ENCODE measurements at regions of chr1 and their contacts with region 1.

Region 1: DNA sequence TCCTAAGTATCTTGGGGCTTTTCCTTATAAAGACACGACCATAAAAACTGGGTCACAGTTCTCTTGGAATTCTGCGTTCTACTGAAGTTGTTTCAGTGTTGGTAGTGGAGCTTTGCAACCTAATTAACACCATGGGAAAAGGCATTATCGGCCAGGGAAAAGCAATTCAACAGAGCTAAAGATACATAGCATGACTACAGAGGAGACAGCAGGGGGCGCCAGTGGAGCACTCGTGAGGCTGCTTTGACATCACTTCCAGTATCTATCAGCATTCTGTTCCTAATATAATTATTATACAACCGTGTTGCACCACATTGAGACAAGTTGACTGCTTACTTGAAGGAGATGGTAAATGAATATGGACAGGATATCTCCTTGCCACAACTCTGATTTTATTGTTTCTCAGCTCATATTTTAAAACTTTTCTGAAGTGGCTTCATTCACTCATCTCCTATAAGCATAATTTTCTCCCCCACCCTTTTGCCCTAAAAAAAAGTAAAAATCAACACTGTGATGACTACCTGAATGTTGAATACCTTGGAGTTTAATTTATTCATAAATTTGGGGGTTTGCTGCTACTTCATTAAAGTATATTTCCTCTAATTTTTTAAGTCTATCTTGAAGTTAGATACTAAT is 39.4 kb downstream of the ZP4 start:
- DNase-seq: peak; percentile 87
- H3K4me3 Mint-ChIP-seq: no peak overlapping the region
- H3K27ac Mint-ChIP-seq: no peak overlapping the region
- H3K4me1 Mint-ChIP-seq: no peaks in the 10 kb centered on the region
- H3K27me3 Mint-ChIP-seq: no peaks in the 10 kb centered on the region
- CTCF ChIP-seq: peak; percentile 97

Region 2: GRCh38 chr1:237809099-237809498 is 42.2 kb before region 1 on chr1:
- CTCF ChIA-PET with region 1: interaction called, 37 read pairs
- POLR2A ChIA-PET with region 1: no interaction called
- intact Hi-C with region 1: no loop called
- DNase-seq: no peak
- H3K4me3 Mint-ChIP-seq: no peak overlapping the region
- H3K27ac Mint-ChIP-seq: no peak overlapping the region
- H3K4me1 Mint-ChIP-seq: no peaks in the 10 kb centered on the region
- H3K27me3 Mint-ChIP-seq: no peaks in the 10 kb centered on the region
- CTCF ChIP-seq: no peak

Region 3: DNA sequence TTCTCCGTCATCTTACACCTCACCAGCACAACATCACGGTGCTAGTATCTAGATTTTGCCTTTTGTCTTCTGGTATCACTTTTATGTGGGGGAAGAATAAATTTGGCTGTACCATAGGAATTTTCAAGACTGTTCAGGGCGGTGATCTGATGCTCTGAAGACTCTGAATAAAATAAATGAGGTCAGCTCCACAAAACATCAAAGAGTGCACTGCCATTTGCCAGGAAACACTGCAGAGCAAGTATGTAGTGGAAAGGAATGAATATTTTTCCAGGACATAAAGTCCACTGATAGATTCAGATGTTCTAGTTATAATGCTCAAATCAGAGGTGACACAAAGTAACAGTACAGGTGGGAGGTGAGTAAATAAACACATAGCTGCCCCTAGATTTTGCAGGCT is 16.9 kb before region 1 on chr1:
- CTCF ChIA-PET with region 1: interaction called, 79 read pairs
- POLR2A ChIA-PET with region 1: interaction called, 13 read pairs
- intact Hi-C with region 1: no loop called
- DNase-seq: no peak
- H3K4me3 Mint-ChIP-seq: no peak overlapping the region
- H3K27ac Mint-ChIP-seq: no peak overlapping the region
- H3K4me1 Mint-ChIP-seq: no peaks in the 10 kb centered on the region
- H3K27me3 Mint-ChIP-seq: no peaks in the 10 kb centered on the region
- CTCF ChIP-seq: no peak

Region 4: DNA sequence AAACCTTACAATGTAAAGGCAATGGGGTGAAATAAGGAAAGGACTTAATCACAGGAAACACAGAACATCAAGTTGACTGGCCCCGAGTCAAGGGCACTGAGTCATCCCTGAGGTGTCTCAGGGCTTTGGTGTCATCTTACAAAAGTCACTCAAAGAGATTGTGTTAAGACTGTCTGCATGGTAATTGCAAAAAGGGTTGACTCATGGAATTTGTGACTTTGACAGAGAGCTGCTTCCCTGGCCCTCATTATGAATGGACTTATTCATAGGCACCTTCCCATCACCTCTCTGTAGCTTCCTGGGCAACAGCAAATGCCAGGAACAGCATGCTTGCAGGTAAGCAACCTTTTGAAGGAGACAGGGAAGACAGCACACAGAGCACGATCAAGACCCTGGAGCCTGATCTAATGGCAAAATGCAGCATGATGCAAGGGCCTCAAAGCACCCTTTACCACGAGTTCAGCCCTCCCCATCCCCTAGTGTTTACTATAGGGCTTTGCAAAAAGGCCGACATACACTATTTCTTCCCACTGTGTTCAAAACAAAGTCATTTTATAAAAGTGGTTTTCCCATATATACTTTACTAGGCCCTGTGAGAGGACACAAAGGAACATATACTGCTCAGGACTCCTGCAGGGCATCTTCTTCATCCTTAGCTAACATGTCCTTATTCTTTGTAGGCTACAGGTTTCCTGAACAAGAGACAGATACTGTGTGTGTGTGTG is 22.3 kb after region 1 on chr1:
- CTCF ChIA-PET with region 1: interaction called, 46 read pairs
- POLR2A ChIA-PET with region 1: interaction called, 3 read pairs
- intact Hi-C with region 1: no loop called
- DNase-seq: peak; percentile 100
- H3K4me3 Mint-ChIP-seq: no peak overlapping the region
- H3K27ac Mint-ChIP-seq: peak overlapping the region; percentile 17
- H3K4me1 Mint-ChIP-seq: peaks cover 31% of the 10 kb centered on the region
- H3K27me3 Mint-ChIP-seq: no peaks in the 10 kb centered on the region
- CTCF ChIP-seq: no peak

Region 5: DNA sequence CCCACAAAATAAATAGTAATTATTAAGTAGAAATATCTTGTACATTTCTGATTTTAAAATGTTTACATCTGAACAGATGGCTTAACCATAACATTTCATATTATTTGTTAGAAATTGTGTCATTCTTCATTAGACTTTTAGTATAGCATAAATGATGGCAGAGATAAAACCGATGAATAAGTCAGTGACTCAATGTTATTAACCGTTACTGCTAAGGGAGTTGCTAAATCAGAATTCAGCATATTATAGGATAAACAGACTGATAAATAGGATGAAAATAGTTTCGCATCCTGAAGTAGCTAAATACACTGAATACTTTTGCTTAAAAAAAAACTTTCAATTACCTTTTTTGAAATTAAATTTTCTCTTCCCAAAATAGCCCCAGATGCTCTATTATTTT is 650.0 kb after region 1 on chr1:
- CTCF ChIA-PET with region 1: no interaction called
- POLR2A ChIA-PET with region 1: no interaction called
- intact Hi-C with region 1: no loop called
- DNase-seq: no peak
- H3K4me3 Mint-ChIP-seq: no peak overlapping the region
- H3K27ac Mint-ChIP-seq: no peak overlapping the region
- H3K4me1 Mint-ChIP-seq: no peaks in the 10 kb centered on the region
- H3K27me3 Mint-ChIP-seq: no peaks in the 10 kb centered on the region
- CTCF ChIP-seq: no peak

Region 6: DNA sequence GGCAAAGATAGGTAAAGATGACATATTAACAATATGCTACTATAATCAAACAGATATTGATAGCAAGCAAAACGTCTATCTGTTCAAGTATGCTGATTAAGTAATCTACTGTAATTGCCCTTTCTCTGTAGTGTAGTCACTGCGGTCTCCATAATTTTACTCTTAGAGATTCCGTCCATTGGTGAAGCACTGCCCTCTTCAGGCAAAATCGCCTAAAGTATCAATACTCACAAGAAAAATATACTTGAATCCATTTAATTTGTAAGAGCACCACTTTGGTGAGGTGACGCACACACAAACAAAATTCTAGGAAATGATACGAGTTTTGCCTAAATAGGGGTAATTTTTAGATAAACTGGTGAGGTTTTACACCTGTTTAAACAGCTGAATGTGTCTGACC is 1100.5 kb after region 1 on chr1:
- CTCF ChIA-PET with region 1: interaction called, 167 read pairs
- POLR2A ChIA-PET with region 1: no interaction called
- intact Hi-C with region 1: loop called (anchors 1 kb)
- DNase-seq: peak; percentile 82
- H3K4me3 Mint-ChIP-seq: no peak overlapping the region
- H3K27ac Mint-ChIP-seq: no peak overlapping the region
- H3K4me1 Mint-ChIP-seq: peaks cover 12% of the 10 kb centered on the region
- H3K27me3 Mint-ChIP-seq: no peaks in the 10 kb centered on the region
- CTCF ChIP-seq: peak; percentile 89

Region 7: GRCh38 chr1:239125027-239125426 is 1273.7 kb after region 1 on chr1:
- CTCF ChIA-PET with region 1: no interaction called
- POLR2A ChIA-PET with region 1: no interaction called
- intact Hi-C with region 1: loop called (anchors 10 kb)
- DNase-seq: peak; percentile 31
- H3K4me3 Mint-ChIP-seq: no peak overlapping the region
- H3K27ac Mint-ChIP-seq: no peak overlapping the region
- H3K4me1 Mint-ChIP-seq: peaks cover 6% of the 10 kb centered on the region
- H3K27me3 Mint-ChIP-seq: no peaks in the 10 kb centered on the region
- CTCF ChIP-seq: no peak

Region 8: GRCh38 chr1:239386453-239387303 is 1535.3 kb after region 1 on chr1 and contains the start of gene CHRM3:
- CTCF ChIA-PET with region 1: no interaction called
- POLR2A ChIA-PET with region 1: no interaction called
- intact Hi-C with region 1: loop called (anchors 1 kb)
- DNase-seq: peak; percentile 96
- H3K4me3 Mint-ChIP-seq: peak within 1 kb of the TSS; percentile 89
- H3K27ac Mint-ChIP-seq: peak within 1 kb of the TSS; percentile 1
- H3K4me1 Mint-ChIP-seq: peaks cover 26% of the 10 kb centered on the region
- H3K27me3 Mint-ChIP-seq: peaks cover 55% of the 10 kb centered on the region
- CTCF ChIP-seq: peak; percentile 28
- total RNA-seq, gene CHRM3: 0.56 and 0.71 TPM in 2 replicates